ENCODE measurements at regions of chr2 and their contacts with region 1.

Region 1: GRCh38 chr2:44335806-44336538 is 25.3 kb downstream of the PREPL start:
- DNase-seq: no peak
- H3K4me3 ChIP-seq: no peak overlapping the region
- H3K4me3 Mint-ChIP-seq: no peak overlapping the region
- H3K27ac Mint-ChIP-seq: no peak overlapping the region
- H3K4me1 ChIP-seq: peaks cover 14% of the 10 kb centered on the region
- H3K4me1 Mint-ChIP-seq: peaks cover 1% of the 10 kb centered on the region
- H3K27me3 ChIP-seq: no peaks in the 10 kb centered on the region
- H3K27me3 Mint-ChIP-seq: no peaks in the 10 kb centered on the region
- CTCF ChIP-seq: no peak

Region 2: DNA sequence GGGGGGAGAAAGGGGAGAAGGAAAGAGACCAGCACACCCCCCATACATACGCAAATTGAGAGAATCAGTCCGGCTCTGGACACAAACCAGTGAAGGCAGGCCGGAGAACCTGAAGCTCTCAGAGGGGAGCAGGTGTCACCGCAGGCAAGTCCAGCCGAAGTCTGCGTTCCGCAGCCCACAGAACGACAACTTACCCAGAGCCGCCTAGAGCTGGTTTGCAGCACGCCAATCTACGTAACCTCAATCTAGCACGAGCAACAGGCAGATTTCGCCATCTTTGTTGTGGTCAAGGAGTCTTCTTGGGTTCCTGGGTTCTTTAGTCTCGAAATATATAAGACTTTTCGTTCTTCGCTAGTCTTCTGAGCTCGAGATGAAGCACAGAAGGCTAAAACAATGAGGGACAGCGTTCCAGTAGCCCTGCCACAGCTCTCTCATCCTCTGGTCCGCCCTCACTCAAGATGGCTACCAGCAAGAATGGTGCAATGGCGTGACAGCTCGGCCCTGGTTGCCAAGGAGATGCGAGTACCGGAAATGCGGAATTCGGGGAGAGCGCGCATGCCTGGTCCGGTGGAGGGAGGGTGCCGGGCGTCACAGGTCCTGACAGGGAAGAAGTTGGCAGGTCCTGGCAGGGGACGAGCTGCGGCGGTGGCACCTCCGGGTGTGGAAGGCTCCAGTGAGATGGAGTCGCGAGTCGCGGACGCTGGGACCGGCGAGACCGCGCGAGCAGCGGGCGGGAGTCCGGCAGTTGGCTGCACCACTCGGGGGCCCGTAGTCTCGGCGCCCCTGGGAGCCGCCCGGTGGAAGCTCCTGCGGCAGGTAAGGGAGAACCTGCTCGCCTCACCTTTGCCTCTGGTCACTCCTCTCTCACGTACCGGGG is 25.6 kb after region 1 on chr2 and contains the starts of genes CAMKMT and PREPL:
- CTCF ChIA-PET with region 1: no interaction called
- POLR2A ChIA-PET with region 1: interaction called, 6 read pairs
- intact Hi-C with region 1: loop called (anchors 2 kb)
- DNase-seq: peak; percentile 99
- H3K4me3 ChIP-seq: peak within 1 kb of the TSS; percentile 93
- H3K4me3 Mint-ChIP-seq: peak within 1 kb of the TSS; percentile 86
- H3K27ac Mint-ChIP-seq: peak within 1 kb of the TSS; percentile 87
- H3K4me1 ChIP-seq: 0 out of 2 replicates have a peak, but pooled peaks cover 7% of the 10 kb centered on the region
- H3K4me1 Mint-ChIP-seq: peaks cover 8% of the 10 kb centered on the region
- H3K27me3 ChIP-seq: no peaks in the 10 kb centered on the region
- H3K27me3 Mint-ChIP-seq: no peaks in the 10 kb centered on the region
- CTCF ChIP-seq: no peak
- total RNA-seq, gene CAMKMT: 24.4 and 25.2 TPM in 2 replicates
- total RNA-seq, gene PREPL: 41.8 and 46.4 TPM in 2 replicates